Sigmoid colon (tissue), 7 donors: ENCODE measurements at regions of chr19 and their contacts with region 1.

Region 1: GRCh38 chr19:8355631-8356402 is 8.1 kb upstream of the ANGPTL4 start:
- DNase-seq: no peak
- H3K4me3 ChIP-seq: no peak overlapping the region
- H3K27ac ChIP-seq: peak overlapping the region in 2 of 4 donors; percentile 13 to 28
- H3K4me1 ChIP-seq: peaks cover 0 to 19% (median 7%) of the 10 kb centered on the region in 4 donors
- H3K27me3 ChIP-seq: peaks cover 0 to 5% (median 0%) of the 10 kb centered on the region in 3 donors
- CTCF ChIP-seq: no peak
- EP300 ChIP-seq: peak in 1 of 4 donors; percentile 8
- POLR2A ChIP-seq: no peak

Region 2: GRCh38 chr19:8396563-8397203 is 40.9 kb after region 1 on chr19:
- intact Hi-C with region 1: loop called (anchors 1 kb)
- DNase-seq: peak; percentile 86
- H3K4me3 ChIP-seq: no peak overlapping the region
- H3K27ac ChIP-seq: peak overlapping the region in 2 of 4 donors; percentile 28 to 100
- H3K4me1 ChIP-seq: peaks cover 0 to 60% (median 55%) of the 10 kb centered on the region in 4 donors
- H3K27me3 ChIP-seq: no peaks in the 10 kb centered on the region
- CTCF ChIP-seq: peak; percentile 30 to 53 (median 39)
- EP300 ChIP-seq: no peak
- POLR2A ChIP-seq: no peak

Region 3: GRCh38 chr19:8505680-8506401 is 150.0 kb after region 1 on chr19:
- intact Hi-C with region 1: loop called (anchors 1 kb)
- DNase-seq: peak; percentile 85
- H3K4me3 ChIP-seq: peak overlapping the region; percentile 23 to 59 (median 54)
- H3K27ac ChIP-seq: peak overlapping the region in 3 of 4 donors; percentile 8 to 43 (median 8)
- H3K4me1 ChIP-seq: peaks cover 0 to 20% (median 11%) of the 10 kb centered on the region in 4 donors
- H3K27me3 ChIP-seq: no peaks in the 10 kb centered on the region
- CTCF ChIP-seq: peak; percentile 82 to 86 (median 86)
- EP300 ChIP-seq: no peak
- POLR2A ChIP-seq: no peak

Region 4: DNA sequence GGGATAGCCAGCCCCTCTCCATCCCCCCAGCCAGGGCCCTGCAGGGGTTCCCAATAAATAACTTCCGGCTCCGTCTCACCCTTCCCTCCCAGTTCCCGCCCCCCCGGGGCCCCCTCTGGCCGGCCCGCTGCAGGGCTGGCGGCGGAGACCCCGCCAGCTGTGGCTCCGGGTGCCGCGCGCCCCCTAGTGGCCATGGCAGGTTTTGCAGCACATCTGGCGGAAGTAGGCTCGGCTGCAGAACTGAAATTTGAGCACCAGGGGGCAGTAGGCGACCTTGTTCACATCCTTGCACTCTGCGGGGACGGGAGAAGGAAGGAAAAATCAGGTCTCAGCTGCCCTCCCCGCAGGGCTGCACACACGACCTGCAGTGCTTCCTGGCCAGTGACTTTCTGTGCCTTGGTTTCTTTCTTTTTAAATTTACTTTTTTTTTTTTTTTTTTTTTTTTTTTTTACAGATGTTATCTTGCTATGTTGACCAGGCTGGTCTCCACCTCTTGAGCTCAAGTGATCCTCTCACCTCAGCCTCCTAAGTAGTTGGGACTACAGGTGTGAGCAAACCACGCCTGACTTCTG is 225.0 kb after region 1 on chr19:
- intact Hi-C with region 1: loop called (anchors 5 kb)
- DNase-seq: peak; percentile 88
- H3K4me3 ChIP-seq: no peak overlapping the region
- H3K27ac ChIP-seq: no peak overlapping the region
- H3K4me1 ChIP-seq: peaks cover 0 to 9% (median 3%) of the 10 kb centered on the region in 4 donors
- H3K27me3 ChIP-seq: peaks cover 4 to 18% (median 17%) of the 10 kb centered on the region in 3 donors
- CTCF ChIP-seq: peak; percentile 95 to 98 (median 96)
- EP300 ChIP-seq: no peak
- POLR2A ChIP-seq: no peak